Dendritic cell treated with granulocyte-macrophage colony-stimulating factor and Interleukin-4, amounts not matched to agents 40 ng/mL and 50 ng/mL, for 4 days (primary cell): ENCODE measurements at regions of chr16 and their contacts with region 1.

Region 1: GRCh38 chr16:12819126-12820117 is 15.7 kb upstream of the CPPED1 start:
- H3K4me3 Mint-ChIP-seq: no peak overlapping the region
- H3K27ac Mint-ChIP-seq: no peak overlapping the region
- H3K4me1 Mint-ChIP-seq: peaks cover 46% of the 10 kb centered on the region
- H3K27me3 Mint-ChIP-seq: peaks cover 18% of the 10 kb centered on the region

Region 2: GRCh38 chr16:12573730-12574383 is 245.6 kb before region 1 on chr16:
- intact Hi-C with region 1: loop called (anchors 5 kb)
- H3K4me3 Mint-ChIP-seq: no peak overlapping the region
- H3K27ac Mint-ChIP-seq: no peak overlapping the region
- H3K4me1 Mint-ChIP-seq: peaks cover 31% of the 10 kb centered on the region
- H3K27me3 Mint-ChIP-seq: peaks cover 12% of the 10 kb centered on the region

Region 3: DNA sequence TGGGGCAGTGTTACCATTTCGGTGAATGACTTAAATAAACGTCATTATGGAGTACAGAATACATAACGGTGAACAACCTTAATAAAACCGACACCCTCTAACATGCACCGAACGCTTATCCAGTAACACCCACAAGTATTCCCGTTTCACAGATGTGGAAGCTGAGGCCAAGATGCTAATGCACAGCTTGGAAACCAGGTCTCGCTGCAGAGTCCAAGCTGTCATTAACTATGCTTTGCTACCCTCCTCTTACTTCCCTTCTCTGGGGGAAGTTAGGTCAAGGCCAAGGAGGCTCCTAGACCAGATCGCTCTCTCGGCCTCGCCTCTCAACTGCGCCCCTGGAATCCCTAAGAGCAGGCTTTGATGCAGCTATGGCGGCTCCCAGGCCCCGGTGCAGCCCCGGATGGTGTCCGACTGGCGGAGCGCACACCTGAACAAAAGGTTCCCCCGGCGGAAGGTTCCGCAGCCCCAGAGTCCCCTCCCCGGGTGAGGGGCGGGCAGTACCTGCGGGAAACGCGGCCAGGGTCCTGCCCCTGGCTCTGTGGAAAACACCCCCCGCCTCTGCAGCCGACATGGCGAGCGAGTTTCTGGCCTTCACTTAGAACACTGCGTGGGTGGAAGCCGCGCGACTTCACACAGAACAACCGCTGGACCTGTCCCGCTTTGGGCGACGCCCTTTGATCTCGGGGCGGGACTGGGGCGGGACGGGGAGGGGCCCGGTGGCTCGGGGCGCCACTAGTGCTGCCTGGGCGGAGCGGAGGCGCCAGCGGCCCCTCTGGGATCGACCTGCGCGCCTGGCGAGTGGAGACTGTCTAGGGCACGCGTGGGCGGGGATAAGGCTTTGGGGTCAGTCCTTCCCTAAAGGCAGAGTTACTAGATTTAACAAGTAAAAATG is 16.0 kb before region 1 on chr16 and contains the start of gene CPPED1:
- intact Hi-C with region 1: loop called (anchors 1 kb)
- H3K4me3 Mint-ChIP-seq: peak within 1 kb of the TSS; percentile 85
- H3K27ac Mint-ChIP-seq: peak within 1 kb of the TSS; percentile 89
- H3K4me1 Mint-ChIP-seq: peaks cover 62% of the 10 kb centered on the region
- H3K27me3 Mint-ChIP-seq: peaks cover 2% of the 10 kb centered on the region

Region 4: GRCh38 chr16:12891836-12892235 is 72.4 kb after region 1 on chr16:
- intact Hi-C with region 1: no loop called
- H3K4me3 Mint-ChIP-seq: no peak overlapping the region
- H3K27ac Mint-ChIP-seq: no peak overlapping the region
- H3K4me1 Mint-ChIP-seq: no peaks in the 10 kb centered on the region
- H3K27me3 Mint-ChIP-seq: peaks cover 18% of the 10 kb centered on the region